Activated CD4-positive, alpha-beta T cell treated with anti-CD3 and anti-CD28 coated beads for 36 hours (primary cell): ENCODE measurements at regions of chr12 and their contacts with region 1.

Region 1: DNA sequence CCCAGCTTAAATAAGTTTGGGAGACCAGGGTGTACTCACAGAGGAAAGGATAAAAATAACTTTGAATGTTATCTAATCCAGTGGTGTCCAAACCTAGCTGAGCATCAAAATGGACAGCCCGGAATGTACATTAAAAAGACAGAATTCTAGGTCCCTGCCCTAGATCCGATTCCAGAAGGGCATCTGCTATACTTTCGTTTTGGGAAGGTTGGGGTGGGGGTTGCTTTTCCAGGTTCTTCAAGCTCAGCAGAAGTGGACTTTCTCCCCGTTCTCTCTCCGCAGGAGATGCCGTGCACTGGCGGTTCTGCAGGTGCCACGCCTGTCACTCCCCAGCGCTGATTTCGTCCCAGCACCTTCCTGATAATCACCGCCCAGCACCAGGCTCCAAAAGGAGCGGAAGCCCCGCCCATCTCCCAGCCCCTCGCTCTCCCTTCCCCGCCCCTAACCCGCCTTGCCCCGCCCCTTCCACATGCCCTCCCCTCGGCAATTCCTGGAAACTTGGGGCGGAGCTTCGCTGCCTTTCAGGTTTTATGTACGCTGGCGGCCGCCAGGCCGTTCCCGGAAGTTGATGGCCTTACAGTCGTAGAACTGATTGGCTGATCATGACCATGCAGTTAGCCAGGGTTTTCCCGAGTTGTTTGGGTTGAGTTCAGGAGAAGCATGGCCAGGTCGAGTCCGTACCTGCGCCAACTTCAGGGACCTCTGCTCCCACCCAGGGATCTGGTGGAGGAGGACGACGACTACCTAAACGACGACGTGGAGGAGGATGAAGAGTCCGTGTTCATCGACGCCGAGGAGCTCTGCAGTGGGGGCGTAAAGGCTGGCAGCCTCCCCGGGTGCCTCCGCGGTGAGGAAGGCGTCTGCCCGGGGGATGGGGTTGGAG is at the start of gene HELB:
- DNase-seq: peak; percentile 99
- ATAC-seq: peak; percentile 83
- H3K4me3 Mint-ChIP-seq: peak within 1 kb of the TSS; percentile 96
- H3K27ac Mint-ChIP-seq: peak within 1 kb of the TSS; percentile 100
- H3K4me1 Mint-ChIP-seq: peaks cover 39% of the 10 kb centered on the region
- H3K27me3 Mint-ChIP-seq: no peaks in the 10 kb centered on the region
- total RNA-seq, gene HELB: 21.0 to 23.6 TPM

Region 2: GRCh38 chr12:64403707-64404469 is 1898.3 kb before region 1 on chr12 and contains the start of gene XPOT:
- CTCF ChIA-PET with region 1: no interaction called
- POLR2A ChIA-PET with region 1: no interaction called
- intact Hi-C with region 1: loop called in 1 of 2 experiments (anchors 10 kb)
- DNase-seq: peak; percentile 97
- ATAC-seq: peak; percentile 90
- H3K4me3 Mint-ChIP-seq: peak within 1 kb of the TSS; percentile 97
- H3K27ac Mint-ChIP-seq: peak within 1 kb of the TSS; percentile 96
- H3K4me1 Mint-ChIP-seq: peaks cover 38% of the 10 kb centered on the region
- H3K27me3 Mint-ChIP-seq: no peaks in the 10 kb centered on the region
- total RNA-seq, gene XPOT: 179 to 187 TPM

Region 3: GRCh38 chr12:65656904-65657351 is 645.3 kb before region 1 on chr12:
- CTCF ChIA-PET with region 1: no interaction called
- POLR2A ChIA-PET with region 1: no interaction called
- intact Hi-C with region 1: loop called in 1 of 2 experiments (anchors 2 kb)
- DNase-seq: peak; percentile 40
- ATAC-seq: peak; percentile 93
- H3K4me3 Mint-ChIP-seq: no peak overlapping the region
- H3K27ac Mint-ChIP-seq: no peak overlapping the region
- H3K4me1 Mint-ChIP-seq: peaks cover 28% of the 10 kb centered on the region
- H3K27me3 Mint-ChIP-seq: peaks cover 58% of the 10 kb centered on the region

Region 4: GRCh38 chr12:66169221-66170170 is 132.7 kb before region 1 on chr12 and contains the start of gene TMBIM4:
- CTCF ChIA-PET with region 1: interaction called, 7 read pairs
- POLR2A ChIA-PET with region 1: interaction called, 3 read pairs
- intact Hi-C with region 1: loop called (anchors 1 kb)
- DNase-seq: peak; percentile 93
- ATAC-seq: peak; percentile 86
- H3K4me3 Mint-ChIP-seq: peak within 1 kb of the TSS; percentile 86
- H3K27ac Mint-ChIP-seq: peak within 1 kb of the TSS; percentile 99
- H3K4me1 Mint-ChIP-seq: peaks cover 41% of the 10 kb centered on the region
- H3K27me3 Mint-ChIP-seq: no peaks in the 10 kb centered on the region
- total RNA-seq, gene TMBIM4: 41.4 to 44.6 TPM

Region 5: GRCh38 chr12:66288121-66288520 is 14.1 kb before region 1 on chr12:
- CTCF ChIA-PET with region 1: no interaction called
- POLR2A ChIA-PET with region 1: interaction called, 8 read pairs
- intact Hi-C with region 1: loop called (anchors 1 kb)
- DNase-seq: peak; percentile 59
- ATAC-seq: peak; percentile 84
- H3K4me3 Mint-ChIP-seq: peak overlapping the region; percentile 43
- H3K27ac Mint-ChIP-seq: peak overlapping the region; percentile 78
- H3K4me1 Mint-ChIP-seq: peaks cover 69% of the 10 kb centered on the region
- H3K27me3 Mint-ChIP-seq: no peaks in the 10 kb centered on the region

Region 6: GRCh38 chr12:66453844-66454243 is 151.7 kb after region 1 on chr12:
- CTCF ChIA-PET with region 1: no interaction called
- POLR2A ChIA-PET with region 1: no interaction called
- intact Hi-C with region 1: no loop called
- DNase-seq: peak; percentile 28
- ATAC-seq: peak; percentile 88
- H3K4me3 Mint-ChIP-seq: no peak overlapping the region
- H3K27ac Mint-ChIP-seq: no peak overlapping the region
- H3K4me1 Mint-ChIP-seq: peaks cover 11% of the 10 kb centered on the region
- H3K27me3 Mint-ChIP-seq: no peaks in the 10 kb centered on the region

Region 7: GRCh38 chr12:67268896-67269631 is 966.9 kb after region 1 on chr12 and contains the start of gene CAND1:
- CTCF ChIA-PET with region 1: no interaction called
- POLR2A ChIA-PET with region 1: no interaction called
- intact Hi-C with region 1: loop called in 1 of 2 experiments (anchors 2 kb)
- DNase-seq: peak; percentile 97
- ATAC-seq: peak; percentile 82
- H3K4me3 Mint-ChIP-seq: peak within 1 kb of the TSS; percentile 98
- H3K27ac Mint-ChIP-seq: peak within 1 kb of the TSS; percentile 100
- H3K4me1 Mint-ChIP-seq: peaks cover 31% of the 10 kb centered on the region
- H3K27me3 Mint-ChIP-seq: no peaks in the 10 kb centered on the region
- total RNA-seq, gene CAND1: 158 to 224 TPM